ENCODE measurements at regions of chr11 and their contacts with region 1.

Region 1: GRCh38 chr11:125091247-125091876 is 20.1 kb downstream of the TMEM218 start:
- DNase-seq: no peak
- ATAC-seq: no peak
- H3K4me3 Mint-ChIP-seq: no peak overlapping the region
- H3K27ac Mint-ChIP-seq: peak overlapping the region; percentile 20
- H3K4me1 Mint-ChIP-seq: peaks cover 8% of the 10 kb centered on the region
- H3K27me3 Mint-ChIP-seq: no peaks in the 10 kb centered on the region

Region 2: GRCh38 chr11:125105926-125106325 is 14.6 kb after region 1 on chr11:
- CTCF ChIA-PET with region 1: interaction called, 12 read pairs
- POLR2A ChIA-PET with region 1: interaction called, 5 read pairs
- DNase-seq: no peak
- ATAC-seq: no peak
- H3K4me3 Mint-ChIP-seq: no peak overlapping the region
- H3K27ac Mint-ChIP-seq: no peak overlapping the region
- H3K4me1 Mint-ChIP-seq: peaks cover 7% of the 10 kb centered on the region
- H3K27me3 Mint-ChIP-seq: no peaks in the 10 kb centered on the region